Activated CD8-positive, alpha-beta T cell treated with anti-CD3 and anti-CD28 coated beads for 36 hours (primary cell): ENCODE measurements at regions of chr5 and their contacts with region 1.

Region 1: DNA sequence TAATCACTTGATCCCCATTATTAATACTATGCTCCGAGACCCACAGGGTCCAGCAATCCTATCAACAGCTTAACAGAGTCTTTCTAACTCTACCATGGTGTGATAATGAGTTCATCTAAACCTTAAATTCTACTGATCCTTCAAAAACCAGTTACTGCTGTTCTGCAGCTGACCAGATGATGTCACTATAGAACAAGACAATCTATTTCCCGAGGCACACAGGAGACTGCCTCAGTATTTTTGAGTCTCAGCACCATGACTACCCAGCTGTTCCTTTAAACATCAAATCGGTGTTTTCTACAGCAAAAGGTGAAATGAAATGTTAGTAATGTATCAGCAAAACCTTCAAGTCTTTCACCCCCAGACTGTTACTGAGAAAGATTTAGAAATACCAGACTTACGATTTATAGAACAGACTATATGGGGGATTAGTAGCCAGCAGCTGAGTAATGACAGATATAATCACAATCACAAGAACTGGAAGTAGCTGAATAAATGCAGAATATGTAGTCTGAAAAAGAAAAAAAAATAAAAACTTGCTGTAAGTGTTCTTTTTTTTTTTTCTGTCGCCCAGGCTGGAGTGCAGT is 16.9 kb downstream of the DNAJC18 start:
- DNase-seq: peak; percentile 72
- ATAC-seq: peak; percentile 96
- H3K4me3 Mint-ChIP-seq: no peak overlapping the region
- H3K27ac Mint-ChIP-seq: no peak overlapping the region
- H3K4me1 Mint-ChIP-seq: peaks cover 5% of the 10 kb centered on the region
- H3K27me3 Mint-ChIP-seq: no peaks in the 10 kb centered on the region
- CTCF ChIP-seq: peak; percentile 96

Region 2: GRCh38 chr5:139251281-139251687 is 171.1 kb before region 1 on chr5:
- CTCF ChIA-PET with region 1: no interaction called
- POLR2A ChIA-PET with region 1: no interaction called
- intact Hi-C with region 1: no loop called
- DNase-seq: peak; percentile 68
- ATAC-seq: no peak
- H3K4me3 Mint-ChIP-seq: no peak overlapping the region
- H3K27ac Mint-ChIP-seq: no peak overlapping the region
- H3K4me1 Mint-ChIP-seq: peaks cover 15% of the 10 kb centered on the region
- H3K27me3 Mint-ChIP-seq: no peaks in the 10 kb centered on the region
- CTCF ChIP-seq: peak; percentile 53

Region 3: DNA sequence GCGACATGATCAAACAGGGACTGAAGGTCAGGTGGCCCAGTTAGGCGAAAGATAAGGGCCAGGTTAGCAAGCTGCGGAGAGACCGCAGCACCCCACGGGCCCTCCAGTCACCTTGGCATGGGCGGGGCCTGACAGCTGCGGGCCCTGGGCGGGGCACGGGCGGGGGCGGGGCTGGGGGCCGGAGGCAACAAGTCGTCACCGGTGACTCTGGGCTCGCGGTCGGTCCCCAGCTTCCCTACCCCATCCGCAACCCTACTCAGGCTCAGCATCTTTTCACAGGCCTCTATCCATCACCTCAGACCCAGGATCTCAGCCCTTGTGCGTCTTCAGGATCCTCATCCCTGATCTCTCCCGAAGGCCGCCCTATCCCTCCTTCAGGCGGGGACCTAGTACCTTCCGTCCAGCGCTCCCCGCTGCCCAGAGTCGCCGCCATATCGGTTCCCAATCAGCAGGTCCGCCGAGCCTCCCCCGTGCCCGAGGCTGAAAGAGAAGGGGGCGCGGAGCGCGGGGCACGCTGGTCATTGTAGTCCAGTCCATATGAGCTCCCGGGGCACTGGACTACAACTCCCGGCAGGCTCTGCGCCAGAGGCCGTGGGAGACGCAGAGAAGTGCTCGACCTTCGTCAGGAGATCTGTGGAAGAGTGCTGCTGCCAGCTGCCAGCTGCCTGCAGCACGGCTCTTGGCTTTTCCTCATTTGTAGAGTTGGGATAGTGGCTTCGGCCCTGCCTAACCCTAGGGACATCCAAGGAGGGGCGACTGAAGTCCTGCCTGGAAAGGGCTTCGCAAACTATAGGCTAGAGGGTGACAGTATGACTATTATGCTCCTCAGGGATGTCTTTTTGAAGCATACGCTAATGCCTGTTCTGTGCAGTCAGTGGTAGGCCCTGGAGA is 16.9 kb after region 1 on chr5 and contains the start of gene DNAJC18:
- CTCF ChIA-PET with region 1: interaction called, 23 read pairs
- POLR2A ChIA-PET with region 1: interaction called, 3 read pairs
- intact Hi-C with region 1: no loop called
- DNase-seq: peak; percentile 98
- ATAC-seq: peak; percentile 91
- H3K4me3 Mint-ChIP-seq: peak within 1 kb of the TSS; percentile 91
- H3K27ac Mint-ChIP-seq: peak within 1 kb of the TSS; percentile 96
- H3K4me1 Mint-ChIP-seq: peaks cover 42% of the 10 kb centered on the region
- H3K27me3 Mint-ChIP-seq: no peaks in the 10 kb centered on the region
- CTCF ChIP-seq: no peak
- total RNA-seq, gene DNAJC18: 24.9 to 27.5 TPM

Region 4: DNA sequence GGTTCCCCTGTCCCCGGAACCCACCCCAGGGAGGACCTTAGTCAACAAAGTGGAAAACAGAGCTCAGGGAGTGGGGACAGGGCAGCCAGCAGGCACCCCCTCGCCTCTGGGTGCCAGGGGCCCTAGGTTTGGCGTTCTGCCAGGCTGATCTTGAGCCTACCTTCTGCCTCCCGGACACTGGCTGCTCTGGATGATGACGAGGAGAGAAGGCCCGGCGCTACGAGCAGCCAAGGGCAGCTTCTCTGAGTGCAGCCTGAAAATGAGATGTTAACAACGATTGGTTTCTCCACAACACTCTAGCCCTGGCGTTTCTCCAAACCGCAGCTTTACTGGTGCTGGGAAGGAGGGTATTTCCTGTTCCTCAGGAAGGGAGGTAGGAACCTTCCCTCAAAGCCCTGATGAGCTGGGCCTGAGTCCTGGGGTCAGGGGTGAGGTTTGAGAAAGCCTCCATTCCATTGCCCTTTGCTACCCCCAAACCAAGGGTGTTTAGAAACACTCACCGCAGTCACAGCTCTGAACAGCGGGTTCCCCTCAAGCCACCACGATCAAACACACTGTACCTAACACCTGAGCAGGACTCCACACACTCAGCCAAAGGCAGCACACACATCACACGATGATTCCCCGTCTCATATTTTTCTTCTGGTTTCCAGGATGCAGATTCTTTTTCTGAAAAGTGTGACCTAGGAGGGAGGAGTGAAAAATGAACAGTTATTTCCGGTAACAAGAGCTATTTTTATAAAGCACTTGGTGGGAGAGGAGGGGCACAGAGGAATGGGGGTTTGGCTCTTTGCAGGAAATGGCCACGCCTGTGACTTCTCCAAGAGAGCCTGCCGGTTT is 59.9 kb after region 1 on chr5 and contains the start of gene STING1:
- CTCF ChIA-PET with region 1: interaction called, 12 read pairs
- POLR2A ChIA-PET with region 1: interaction called, 4 read pairs
- intact Hi-C with region 1: no loop called
- DNase-seq: peak; percentile 77
- ATAC-seq: peak; percentile 80
- H3K4me3 Mint-ChIP-seq: peak within 1 kb of the TSS; percentile 80
- H3K27ac Mint-ChIP-seq: peak within 1 kb of the TSS; percentile 91
- H3K4me1 Mint-ChIP-seq: peaks cover 34% of the 10 kb centered on the region
- H3K27me3 Mint-ChIP-seq: no peaks in the 10 kb centered on the region
- CTCF ChIP-seq: no peak
- total RNA-seq, gene STING1: 43.7 to 46.3 TPM

Region 5: DNA sequence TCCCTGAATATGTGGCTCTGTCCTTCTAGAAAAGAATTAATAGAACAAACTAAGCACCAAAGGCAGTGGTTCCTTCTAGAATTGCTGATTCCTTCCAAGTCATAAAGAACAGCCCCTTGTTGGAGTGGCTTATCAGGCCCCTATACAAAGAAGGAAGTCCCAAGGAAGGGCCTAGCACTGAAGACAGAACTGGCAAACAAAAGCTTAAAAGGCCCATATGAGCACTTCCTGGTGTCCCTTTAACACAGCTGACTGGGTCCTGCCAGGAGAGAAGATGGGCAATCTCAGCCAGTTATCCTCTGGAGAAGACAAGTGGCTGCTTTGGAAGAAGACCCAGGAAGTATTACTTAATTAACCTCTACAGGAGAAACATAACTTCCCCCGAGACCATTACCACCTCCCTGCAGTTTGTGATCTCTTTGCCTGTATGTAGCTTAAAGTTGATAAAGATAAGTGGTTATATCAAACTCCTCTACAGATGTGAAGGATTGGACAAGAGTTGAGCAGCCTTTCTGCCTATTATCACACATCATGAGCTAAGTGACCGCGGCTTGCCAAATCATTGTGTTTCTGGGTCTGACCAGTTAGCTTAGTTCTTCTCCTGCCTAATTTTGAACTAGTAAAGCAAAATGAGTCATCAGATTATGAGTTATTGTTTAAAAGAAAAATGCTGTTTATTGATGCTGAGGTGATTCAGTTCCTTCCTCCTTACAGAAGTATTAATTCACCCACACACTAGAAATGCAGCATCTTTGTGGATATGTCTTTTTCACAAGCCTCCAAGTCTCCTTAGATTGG is 73.4 kb after region 1 on chr5:
- CTCF ChIA-PET with region 1: interaction called, 17 read pairs
- POLR2A ChIA-PET with region 1: interaction called, 3 read pairs
- intact Hi-C with region 1: no loop called
- DNase-seq: no peak
- ATAC-seq: peak; percentile 64
- H3K4me3 Mint-ChIP-seq: no peak overlapping the region
- H3K27ac Mint-ChIP-seq: peak overlapping the region; percentile 12
- H3K4me1 Mint-ChIP-seq: peaks cover 17% of the 10 kb centered on the region
- H3K27me3 Mint-ChIP-seq: no peaks in the 10 kb centered on the region
- CTCF ChIP-seq: no peak

Region 6: DNA sequence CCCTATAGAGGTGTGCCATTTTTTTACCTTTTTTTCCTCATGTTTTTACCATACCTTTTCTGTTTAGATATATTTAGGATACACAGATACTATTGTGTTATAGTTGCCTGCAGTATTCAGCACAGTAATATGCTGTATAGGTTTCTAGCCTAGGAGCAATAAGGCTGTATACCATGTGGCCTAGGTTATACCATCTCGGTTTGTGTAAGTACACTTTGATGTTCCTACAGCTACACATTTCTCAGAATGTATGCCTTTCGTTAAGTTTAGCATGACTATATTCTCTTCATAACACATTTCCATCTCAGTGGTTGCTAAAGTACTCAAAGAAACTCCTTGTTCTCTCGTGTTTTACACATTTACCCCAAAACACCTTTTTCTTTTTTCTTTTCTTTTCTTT is 161.7 kb after region 1 on chr5:
- CTCF ChIA-PET with region 1: interaction called, 10 read pairs
- POLR2A ChIA-PET with region 1: no interaction called
- intact Hi-C with region 1: no loop called
- DNase-seq: no peak
- ATAC-seq: peak; percentile 94
- H3K4me3 Mint-ChIP-seq: no peak overlapping the region
- H3K27ac Mint-ChIP-seq: peak overlapping the region; percentile 80
- H3K4me1 Mint-ChIP-seq: peaks cover 62% of the 10 kb centered on the region
- H3K27me3 Mint-ChIP-seq: no peaks in the 10 kb centered on the region
- CTCF ChIP-seq: no peak